ENCODE measurements at regions of chr7 and their contacts with region 1.

Region 1: DNA sequence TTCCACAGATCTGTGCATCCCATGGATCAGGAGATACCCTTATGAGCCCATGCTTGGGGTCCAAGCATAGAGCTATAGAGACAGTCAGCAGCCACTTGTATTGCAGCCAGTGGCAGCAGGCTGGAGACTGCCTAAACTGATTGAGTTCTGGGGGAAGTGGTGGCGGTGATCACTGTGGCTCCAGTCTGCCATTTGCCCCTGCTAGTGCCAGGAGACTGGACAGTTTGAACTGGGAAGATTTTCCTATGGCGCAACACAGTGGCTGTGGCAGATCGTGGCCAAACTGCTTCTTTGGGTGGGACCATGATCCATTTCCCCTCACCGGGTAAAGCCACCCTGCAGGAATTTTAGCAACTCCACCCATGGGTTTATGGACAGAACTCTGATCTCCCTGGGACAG is 679.7 kb upstream of the SEMA3D start:
- DNase-seq: no peak
- H3K4me3 ChIP-seq: no peak overlapping the region
- H3K27ac ChIP-seq: no peak overlapping the region
- H3K4me1 ChIP-seq: no peaks in the 10 kb centered on the region
- H3K27me3 ChIP-seq: no peaks in the 10 kb centered on the region
- CTCF ChIP-seq: no peak

Region 2: GRCh38 chr7:85583131-85583953 is 283.2 kb before region 1 on chr7:
- CTCF ChIA-PET with region 1: no interaction called
- POLR2A ChIA-PET with region 1: interaction called, 10 read pairs
- intact Hi-C with region 1: no loop called
- DNase-seq: no peak
- H3K4me3 ChIP-seq: no peak overlapping the region
- H3K27ac ChIP-seq: no peak overlapping the region
- H3K4me1 ChIP-seq: no peaks in the 10 kb centered on the region
- H3K27me3 ChIP-seq: no peaks in the 10 kb centered on the region
- CTCF ChIP-seq: no peak